GM12878 (cell line): ENCODE measurements at regions of chr7 and their contacts with region 1.

Region 1: GRCh38 chr7:37957221-37957980 is 37.0 kb downstream of the EPDR1 start:
- DNase-seq: no peak
- ATAC-seq: no peak
- H3K4me3 ChIP-seq: no peak overlapping the region
- H3K27ac ChIP-seq: no peak overlapping the region
- H3K4me1 ChIP-seq: no peaks in the 10 kb centered on the region
- H3K27me3 ChIP-seq: no peaks in the 10 kb centered on the region
- CTCF ChIP-seq: no peak
- EP300 ChIP-seq: no peak
- POLR2A ChIP-seq: no peak
- RAD21 ChIP-seq: no peak

Region 2: GRCh38 chr7:38375453-38375852 is 418.1 kb after region 1 on chr7:
- CTCF ChIA-PET with region 1: no interaction called
- POLR2A ChIA-PET with region 1: no interaction called
- RAD21 ChIA-PET with region 1: no interaction called
- SMC1A ChIA-PET with region 1: no interaction called
- in situ Hi-C with region 1: no loop called
- intact Hi-C with region 1: no loop called
- DNase-seq: no peak
- ATAC-seq: no peak
- H3K4me3 ChIP-seq: no peak overlapping the region
- H3K27ac ChIP-seq: no peak overlapping the region
- H3K4me1 ChIP-seq: no peaks in the 10 kb centered on the region
- H3K27me3 ChIP-seq: no peaks in the 10 kb centered on the region
- CTCF ChIP-seq: no peak
- EP300 ChIP-seq: no peak
- POLR2A ChIP-seq: no peak
- RAD21 ChIP-seq: no peak

Region 3: GRCh38 chr7:38448054-38448453 is 490.7 kb after region 1 on chr7:
- CTCF ChIA-PET with region 1: no interaction called
- POLR2A ChIA-PET with region 1: no interaction called
- RAD21 ChIA-PET with region 1: no interaction called
- SMC1A ChIA-PET with region 1: no interaction called
- in situ Hi-C with region 1: no loop called
- intact Hi-C with region 1: loop called (anchors 5 kb)
- DNase-seq: no peak
- ATAC-seq: no peak
- H3K4me3 ChIP-seq: no peak overlapping the region
- H3K27ac ChIP-seq: no peak overlapping the region
- H3K4me1 ChIP-seq: no peaks in the 10 kb centered on the region
- H3K27me3 ChIP-seq: no peaks in the 10 kb centered on the region
- CTCF ChIP-seq: no peak
- EP300 ChIP-seq: no peak
- POLR2A ChIP-seq: no peak
- RAD21 ChIP-seq: no peak